Activated CD4-positive, alpha-beta T cell treated with anti-CD3 and anti-CD28 coated beads for 36 hours (primary cell): ENCODE measurements at regions of chr1 and their contacts with region 1.

Region 1: GRCh38 chr1:40161125-40161887 is at the start of gene RLF:
- DNase-seq: peak; percentile 98
- ATAC-seq: peak; percentile 81
- H3K4me3 Mint-ChIP-seq: no peak within 1 kb of the TSS
- H3K27ac Mint-ChIP-seq: no peak within 1 kb of the TSS
- H3K4me1 Mint-ChIP-seq: peaks cover 4% of the 10 kb centered on the region
- H3K27me3 Mint-ChIP-seq: no peaks in the 10 kb centered on the region
- total RNA-seq, gene RLF: 20.1 to 20.9 TPM

Region 2: DNA sequence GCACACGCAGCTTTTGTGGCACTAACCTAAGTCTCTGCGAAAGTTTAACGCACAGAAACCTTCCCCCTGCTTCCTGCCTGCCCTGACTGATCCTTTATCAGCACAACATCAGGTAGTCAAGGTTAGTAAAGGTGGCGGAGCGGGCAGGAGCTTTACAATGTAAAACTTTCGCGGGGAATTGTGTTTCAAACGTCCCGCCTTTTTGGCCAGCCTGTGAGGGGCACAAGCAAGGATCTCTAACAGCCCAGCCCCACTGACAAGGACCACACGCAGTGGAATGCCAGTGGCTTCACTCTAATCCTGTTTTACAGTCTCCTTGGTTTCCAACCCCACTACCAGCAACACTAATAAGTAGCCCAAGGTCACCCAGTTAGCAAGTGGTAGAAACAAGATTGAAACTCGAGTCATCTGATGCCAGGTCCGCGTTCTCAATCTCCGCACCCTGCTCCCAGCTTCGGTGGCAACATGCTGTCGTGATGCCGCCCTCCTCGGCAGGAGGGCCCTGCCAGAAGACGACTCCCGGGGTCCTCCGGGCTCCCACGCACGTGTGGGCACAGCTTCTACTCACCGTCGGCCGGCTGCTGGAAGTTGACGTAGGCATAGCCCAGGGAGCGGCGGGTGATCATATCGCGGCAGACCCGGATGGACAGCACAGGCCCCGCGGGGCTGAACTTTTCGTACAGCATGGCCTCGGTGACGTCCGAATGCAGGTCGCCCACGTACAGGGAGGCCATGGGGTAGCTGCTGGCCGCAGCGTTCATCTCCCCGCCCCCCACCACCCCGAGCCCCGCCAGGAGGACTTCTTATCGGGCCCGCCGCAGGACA is 585.9 kb before region 1 on chr1:
- CTCF ChIA-PET with region 1: no interaction called
- POLR2A ChIA-PET with region 1: no interaction called
- intact Hi-C with region 1: loop called in 1 of 2 experiments (anchors 2 kb)
- DNase-seq: peak; percentile 69
- ATAC-seq: peak; percentile 40
- H3K4me3 Mint-ChIP-seq: peak overlapping the region; percentile 90
- H3K27ac Mint-ChIP-seq: peak overlapping the region; percentile 90
- H3K4me1 Mint-ChIP-seq: peaks cover 42% of the 10 kb centered on the region
- H3K27me3 Mint-ChIP-seq: no peaks in the 10 kb centered on the region

Region 3: DNA sequence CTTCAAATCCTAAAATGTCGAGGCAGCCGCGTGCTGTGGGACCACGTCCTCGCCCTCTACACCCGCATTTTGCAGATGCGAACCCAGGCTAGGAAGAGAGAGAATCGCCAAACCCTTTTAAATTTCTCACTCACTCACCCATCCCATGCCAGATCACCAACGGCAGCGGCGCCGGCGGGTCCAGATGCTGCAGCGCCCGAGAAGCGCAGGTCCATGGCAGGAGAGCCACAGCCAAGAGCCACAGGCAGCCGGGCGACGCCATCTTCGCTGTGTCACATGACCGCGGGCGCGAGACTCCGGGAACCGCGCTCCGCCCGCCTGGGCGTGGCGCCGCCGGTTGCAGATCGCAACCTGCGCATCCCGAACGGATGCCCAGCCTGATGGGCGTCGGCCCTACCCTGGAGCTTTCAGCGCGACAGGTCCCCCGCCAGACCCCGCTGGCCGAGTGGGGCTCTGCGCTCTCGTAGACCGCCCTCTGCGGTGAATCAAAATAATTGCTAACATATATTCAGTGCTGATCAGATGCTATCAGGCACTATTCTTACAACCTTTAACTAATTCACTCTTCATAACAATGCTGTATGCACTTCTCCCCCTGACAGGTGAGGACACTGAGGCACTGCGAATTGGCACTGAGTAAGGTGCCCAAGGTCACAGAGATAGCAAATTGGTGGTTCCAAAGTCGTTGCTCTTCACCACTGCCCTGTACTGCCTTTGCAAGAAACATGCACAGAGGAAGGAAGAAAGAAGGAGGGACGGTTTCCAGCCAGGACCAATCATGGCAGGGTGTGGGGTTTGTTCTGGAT is 64.1 kb before region 1 on chr1 and contains the start of gene PPT1:
- CTCF ChIA-PET with region 1: interaction called, 3 read pairs
- POLR2A ChIA-PET with region 1: no interaction called
- intact Hi-C with region 1: loop called in 1 of 2 experiments (anchors 2 kb)
- DNase-seq: peak; percentile 91
- ATAC-seq: peak; percentile 96
- H3K4me3 Mint-ChIP-seq: peak within 1 kb of the TSS; percentile 90
- H3K27ac Mint-ChIP-seq: peak within 1 kb of the TSS; percentile 91
- H3K4me1 Mint-ChIP-seq: peaks cover 37% of the 10 kb centered on the region
- H3K27me3 Mint-ChIP-seq: peaks cover 4% of the 10 kb centered on the region
- total RNA-seq, gene PPT1: 75.4 to 77.4 TPM

Region 4: GRCh38 chr1:40241362-40241761 is 80.1 kb after region 1 on chr1:
- CTCF ChIA-PET with region 1: interaction called, 3 read pairs
- POLR2A ChIA-PET with region 1: interaction called, 4 read pairs
- intact Hi-C with region 1: loop called in 1 of 2 experiments (anchors 5 kb)
- DNase-seq: no peak
- ATAC-seq: peak; percentile 62
- H3K4me3 Mint-ChIP-seq: peak overlapping the region; percentile 6
- H3K27ac Mint-ChIP-seq: peak overlapping the region; percentile 81
- H3K4me1 Mint-ChIP-seq: peaks cover 52% of the 10 kb centered on the region
- H3K27me3 Mint-ChIP-seq: peaks cover 3% of the 10 kb centered on the region

Region 5: DNA sequence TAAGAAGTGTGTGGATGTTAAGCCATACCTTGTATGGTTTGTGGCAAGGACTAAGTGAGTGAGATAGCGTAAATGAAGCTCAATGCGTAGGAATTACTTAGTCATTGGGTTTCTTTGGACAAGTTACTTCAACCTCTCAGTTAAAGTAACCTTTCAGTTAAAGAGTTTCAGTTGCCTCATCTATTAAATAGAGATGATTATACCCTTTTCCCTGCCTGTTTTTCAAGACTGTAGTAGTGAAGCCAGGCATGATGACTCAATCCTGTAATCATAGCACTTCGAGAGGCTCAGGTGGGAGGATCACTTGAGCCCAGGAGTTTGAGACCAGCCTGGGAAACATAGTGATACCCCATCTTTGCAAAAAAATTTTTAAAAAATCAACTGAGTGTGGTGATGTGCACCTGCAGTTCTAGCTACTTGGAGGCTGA is 103.1 kb after region 1 on chr1:
- CTCF ChIA-PET with region 1: no interaction called
- POLR2A ChIA-PET with region 1: interaction called, 8 read pairs
- intact Hi-C with region 1: loop called in 1 of 2 experiments (anchors 1 kb)
- DNase-seq: peak; percentile 48
- ATAC-seq: peak; percentile 94
- H3K4me3 Mint-ChIP-seq: no peak overlapping the region
- H3K27ac Mint-ChIP-seq: peak overlapping the region; percentile 91
- H3K4me1 Mint-ChIP-seq: peaks cover 62% of the 10 kb centered on the region
- H3K27me3 Mint-ChIP-seq: no peaks in the 10 kb centered on the region

Region 6: GRCh38 chr1:40404670-40405462 is 243.6 kb after region 1 on chr1:
- CTCF ChIA-PET with region 1: interaction called, 4 read pairs
- POLR2A ChIA-PET with region 1: no interaction called
- intact Hi-C with region 1: loop called in 1 of 2 experiments (anchors 2 kb)
- DNase-seq: peak; percentile 61
- ATAC-seq: peak; percentile 34
- H3K4me3 Mint-ChIP-seq: peak overlapping the region; percentile 3
- H3K27ac Mint-ChIP-seq: peak overlapping the region; percentile 91
- H3K4me1 Mint-ChIP-seq: peaks cover 64% of the 10 kb centered on the region
- H3K27me3 Mint-ChIP-seq: no peaks in the 10 kb centered on the region